CD14-positive monocyte (primary cell): ENCODE measurements at regions of chr12 and their contacts with region 1.

Region 1: GRCh38 chr12:6316922-6317692 is 6.6 kb downstream of the PLEKHG6 start:
- DNase-seq: no peak
- H3K4me3 ChIP-seq: no peak overlapping the region
- H3K4me3 Mint-ChIP-seq: no peak overlapping the region
- H3K27ac ChIP-seq: no peak overlapping the region
- H3K27ac Mint-ChIP-seq: no peak overlapping the region
- H3K4me1 ChIP-seq: peaks cover 5 to 8% of the 10 kb centered on the region in 2 donors
- H3K4me1 Mint-ChIP-seq: peaks cover 13% of the 10 kb centered on the region
- H3K27me3 ChIP-seq: peaks cover 0 to 7% of the 10 kb centered on the region in 2 donors
- H3K27me3 Mint-ChIP-seq: peaks cover 30 to 33% (median 31%) of the 10 kb centered on the region in 3 donors
- CTCF ChIP-seq: no peak

Region 2: DNA sequence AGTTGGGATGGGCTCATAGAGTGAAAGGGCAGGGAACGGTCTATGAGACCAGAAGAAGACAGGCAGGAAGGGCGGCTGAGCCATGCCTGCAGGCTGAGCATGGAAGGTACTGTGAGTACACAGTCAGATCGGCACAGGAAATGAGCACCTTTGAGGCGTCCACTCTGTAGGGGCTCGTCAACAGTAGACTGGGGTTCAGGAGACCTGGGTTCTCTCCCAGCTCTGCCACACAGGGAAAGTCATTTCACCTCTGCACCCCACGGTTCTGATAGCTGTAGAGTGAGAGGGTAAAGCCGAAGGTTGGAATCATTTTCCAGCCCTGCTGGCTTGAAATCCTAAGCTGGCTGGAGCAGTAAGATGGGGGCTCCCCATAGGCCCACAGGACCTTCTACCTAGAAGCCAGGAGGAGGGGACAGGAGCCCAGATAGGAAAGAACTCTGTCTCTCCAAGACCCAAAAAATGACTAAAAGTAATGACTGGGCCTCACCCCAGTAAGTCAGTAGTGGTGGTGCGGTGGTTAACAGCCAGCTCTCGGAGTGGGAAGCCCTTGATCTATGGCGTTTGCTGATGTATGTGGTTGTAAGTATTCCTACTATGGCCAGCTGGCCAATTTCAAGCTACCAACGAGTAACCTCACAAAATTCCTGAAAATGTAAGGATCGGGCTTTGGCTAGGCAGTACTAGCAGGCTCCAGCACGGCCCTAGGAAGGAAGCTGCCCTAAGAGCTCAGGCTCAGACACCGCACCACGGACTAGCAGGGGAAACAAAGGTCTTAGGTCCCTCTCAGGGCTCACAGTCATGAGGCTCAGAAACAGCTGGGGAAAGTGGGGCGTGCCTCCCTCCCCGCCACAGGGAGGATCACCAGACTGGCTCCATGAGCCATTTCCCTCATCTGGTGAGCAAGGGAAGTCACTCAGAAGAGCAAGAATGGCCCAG is 117.4 kb after region 1 on chr12:
- intact Hi-C with region 1: no loop called
- DNase-seq: no peak
- H3K4me3 ChIP-seq: no peak overlapping the region
- H3K4me3 Mint-ChIP-seq: no peak overlapping the region
- H3K27ac ChIP-seq: no peak overlapping the region
- H3K27ac Mint-ChIP-seq: no peak overlapping the region
- H3K4me1 ChIP-seq: peaks cover 18% of the 10 kb centered on the region in 2 donors
- H3K4me1 Mint-ChIP-seq: peaks cover 19% of the 10 kb centered on the region
- H3K27me3 ChIP-seq: no peaks in the 10 kb centered on the region
- H3K27me3 Mint-ChIP-seq: peaks cover 0 to 6% (median 3%) of the 10 kb centered on the region in 3 donors
- CTCF ChIP-seq: no peak

Region 3: DNA sequence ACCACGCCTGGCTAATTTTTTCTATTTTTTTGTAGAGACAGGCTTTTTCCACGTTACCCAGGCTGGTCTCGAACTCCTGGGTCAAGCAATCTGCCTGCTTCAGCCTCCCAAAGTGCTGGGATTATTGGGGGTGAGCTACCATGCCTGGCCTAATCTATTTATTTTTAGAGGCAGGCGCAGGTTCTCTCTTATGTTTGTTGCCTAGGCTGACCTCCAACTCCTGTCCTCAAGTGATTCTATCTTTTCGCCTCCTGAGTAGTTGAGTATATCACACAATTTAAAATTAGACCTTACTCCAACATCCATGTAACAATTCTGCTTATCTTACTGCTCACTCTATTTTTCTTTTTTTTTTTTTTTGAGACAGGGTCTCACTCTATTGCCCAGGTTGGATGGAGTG is 336.9 kb after region 1 on chr12:
- intact Hi-C with region 1: loop called in 1 of 2 experiments (anchors 5 kb)
- DNase-seq: no peak
- H3K4me3 ChIP-seq: no peak overlapping the region
- H3K4me3 Mint-ChIP-seq: no peak overlapping the region
- H3K27ac ChIP-seq: no peak overlapping the region
- H3K27ac Mint-ChIP-seq: no peak overlapping the region
- H3K4me1 ChIP-seq: no peaks in the 10 kb centered on the region
- H3K4me1 Mint-ChIP-seq: no peaks in the 10 kb centered on the region
- H3K27me3 ChIP-seq: no peaks in the 10 kb centered on the region
- H3K27me3 Mint-ChIP-seq: peaks cover 0 to 2% (median 1%) of the 10 kb centered on the region in 3 donors
- CTCF ChIP-seq: no peak